Dendritic cell treated with granulocyte-macrophage colony-stimulating factor and Interleukin-4, amounts not matched to agents 40 ng/mL and 50 ng/mL, for 4 days (primary cell): ENCODE measurements at regions of chr14 and their contacts with region 1.

Region 1: DNA sequence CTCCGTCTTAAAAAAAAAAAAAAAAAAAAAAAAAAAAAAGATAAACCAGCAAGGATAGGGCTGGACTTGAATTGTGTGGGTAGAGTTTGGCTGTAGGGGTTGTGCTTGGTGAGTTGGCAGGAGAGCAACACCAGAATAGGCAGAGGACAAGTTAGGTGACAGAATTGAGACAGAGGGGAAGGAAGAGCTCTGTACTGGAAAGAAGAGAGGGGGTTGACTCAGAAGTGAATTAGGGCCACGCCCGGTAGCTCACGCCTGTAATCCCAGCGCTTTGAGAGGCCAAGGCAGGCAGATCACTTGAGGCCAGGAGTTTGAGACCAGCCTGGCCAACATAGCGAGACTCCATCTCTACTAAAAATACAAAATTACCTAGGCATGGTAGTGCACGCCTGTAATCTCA is 6.1 kb upstream of the TMEM30B start:
- H3K4me3 Mint-ChIP-seq: no peak overlapping the region
- H3K27ac Mint-ChIP-seq: no peak overlapping the region
- H3K4me1 Mint-ChIP-seq: no peaks in the 10 kb centered on the region
- H3K27me3 Mint-ChIP-seq: peaks cover 28% of the 10 kb centered on the region

Region 2: DNA sequence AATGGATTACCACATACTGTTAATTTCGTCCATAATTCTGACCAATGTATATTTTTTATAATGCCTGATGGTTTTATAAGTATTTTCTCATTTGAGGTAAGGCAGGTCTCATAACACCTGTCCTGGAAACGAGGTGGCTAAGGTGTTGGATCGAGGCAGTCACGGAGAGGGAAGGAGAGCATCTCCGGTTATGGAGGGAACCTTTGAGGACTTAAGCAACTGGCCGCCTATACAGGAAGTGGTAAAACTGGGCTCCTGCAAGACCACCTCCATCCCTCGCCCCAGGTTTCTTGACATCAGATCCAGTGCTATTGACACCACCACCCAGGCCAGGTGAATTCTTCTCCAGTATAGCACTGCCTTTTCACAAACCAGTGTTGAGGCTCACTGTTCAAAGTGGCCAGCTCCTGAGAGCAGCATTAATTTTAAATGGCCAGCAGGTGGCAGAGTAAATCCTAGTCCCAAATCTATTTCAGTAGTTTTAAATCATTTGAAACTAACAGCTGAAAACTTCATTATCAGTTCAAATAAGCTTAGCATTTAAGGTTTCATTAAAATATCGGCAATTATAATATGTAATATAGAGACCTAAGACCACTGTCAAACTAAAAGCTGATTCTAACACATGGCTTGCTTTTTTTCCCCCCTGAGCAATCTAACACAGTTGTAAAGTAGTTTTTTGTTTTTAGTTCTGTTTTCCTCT is 937.4 kb before region 1 on chr14:
- intact Hi-C with region 1: loop called (anchors 2 kb)
- H3K4me3 Mint-ChIP-seq: no peak overlapping the region
- H3K27ac Mint-ChIP-seq: no peak overlapping the region
- H3K4me1 Mint-ChIP-seq: no peaks in the 10 kb centered on the region
- H3K27me3 Mint-ChIP-seq: peaks cover 5% of the 10 kb centered on the region

Region 3: DNA sequence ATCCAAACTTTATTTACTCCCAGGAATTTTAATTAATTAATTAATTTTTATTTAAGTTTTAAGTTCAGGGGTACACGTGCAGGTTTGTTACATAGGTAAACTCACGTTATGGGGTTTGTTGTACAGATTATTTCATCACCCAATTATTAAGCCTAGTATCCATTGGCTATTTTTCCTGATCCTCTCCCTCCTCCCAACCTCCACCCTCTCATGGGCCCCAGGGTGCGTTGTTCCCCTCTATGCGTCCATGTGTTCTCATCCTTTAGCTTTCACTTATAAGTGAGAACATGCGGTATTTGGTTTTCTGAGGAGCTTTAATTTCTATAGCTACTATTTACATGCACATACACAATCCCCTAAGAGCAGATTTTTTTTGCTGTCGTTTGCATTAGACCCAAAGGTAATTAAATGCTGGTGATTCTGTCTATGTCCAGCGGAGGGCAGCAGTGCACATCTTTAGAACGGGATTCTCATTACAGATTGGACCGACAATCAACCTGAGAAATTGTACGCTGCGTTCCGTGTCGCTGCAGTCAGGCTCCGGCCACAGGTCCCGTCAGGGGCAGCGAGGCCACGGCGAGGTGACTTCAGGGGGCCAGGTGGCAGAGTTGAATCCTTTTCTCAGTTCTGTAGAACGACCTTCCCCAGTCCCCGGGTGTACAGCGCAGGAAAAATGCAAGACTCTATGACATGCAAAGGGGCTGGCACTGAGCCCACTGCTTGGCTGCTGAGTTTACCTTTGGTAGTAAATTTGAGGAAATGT is 17.7 kb before region 1 on chr14:
- intact Hi-C with region 1: loop called (anchors 1 kb)
- H3K4me3 Mint-ChIP-seq: peak overlapping the region; percentile 45
- H3K27ac Mint-ChIP-seq: no peak overlapping the region
- H3K4me1 Mint-ChIP-seq: peaks cover 5% of the 10 kb centered on the region
- H3K27me3 Mint-ChIP-seq: peaks cover 54% of the 10 kb centered on the region

Region 4: DNA sequence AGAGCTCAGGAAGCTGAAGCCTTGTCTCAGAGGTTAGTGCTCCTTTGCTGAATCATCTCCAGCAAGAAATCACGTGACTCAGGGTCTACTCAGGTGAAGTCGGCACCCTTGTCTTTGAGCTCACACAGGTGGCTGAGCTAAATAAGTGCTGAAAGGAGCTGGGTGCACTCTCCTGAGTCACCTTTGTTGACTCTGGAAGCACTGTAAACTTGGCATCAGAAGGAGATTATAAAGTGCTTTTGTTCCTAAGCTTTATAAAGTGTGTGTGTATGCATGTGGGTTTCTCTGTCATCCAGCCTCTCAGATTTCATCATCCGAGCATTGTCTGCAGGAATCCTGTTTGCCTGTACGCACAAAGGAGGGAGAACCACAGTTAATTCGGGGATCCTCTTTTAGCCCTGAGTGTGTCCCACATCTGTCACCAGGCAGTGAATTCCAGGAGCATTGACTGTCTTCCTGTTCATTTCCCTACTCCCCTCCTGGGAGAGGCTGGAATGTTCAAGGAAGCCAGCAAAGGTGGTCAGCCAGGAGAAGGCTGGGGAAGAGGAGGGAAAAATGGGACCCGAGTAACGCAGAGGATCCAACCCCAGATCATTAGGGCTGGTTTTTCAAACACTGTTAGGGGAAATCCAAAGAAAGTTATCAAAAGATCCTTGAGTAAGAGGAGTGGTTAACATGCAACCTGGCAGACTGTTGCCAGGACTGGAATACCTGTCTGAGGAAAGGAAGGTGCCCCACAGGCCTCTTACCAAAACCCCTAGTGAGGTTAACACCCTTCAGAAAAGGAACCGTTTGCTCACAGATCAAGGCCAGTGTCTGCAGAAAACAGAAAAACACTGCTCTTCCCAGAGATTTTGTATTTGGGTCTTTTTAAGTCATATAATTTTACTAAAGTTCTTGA is 250.6 kb after region 1 on chr14:
- intact Hi-C with region 1: no loop called
- H3K4me3 Mint-ChIP-seq: no peak overlapping the region
- H3K27ac Mint-ChIP-seq: peak overlapping the region; percentile 51
- H3K4me1 Mint-ChIP-seq: peaks cover 20% of the 10 kb centered on the region
- H3K27me3 Mint-ChIP-seq: no peaks in the 10 kb centered on the region

Region 5: GRCh38 chr14:61889914-61890351 is 602.7 kb after region 1 on chr14:
- intact Hi-C with region 1: no loop called
- H3K4me3 Mint-ChIP-seq: peak overlapping the region; percentile 62
- H3K27ac Mint-ChIP-seq: peak overlapping the region; percentile 94
- H3K4me1 Mint-ChIP-seq: peaks cover 36% of the 10 kb centered on the region
- H3K27me3 Mint-ChIP-seq: peaks cover 19% of the 10 kb centered on the region